CD4-positive, alpha-beta T cell (primary cell): ENCODE measurements at regions of chr13 and their contacts with region 1.

Region 1: GRCh38 chr13:43905435-43906031 is 25.8 kb downstream of the LACC1 start:
- DNase-seq: peak in 8 of 14 experiments; percentile 2 to 75 (median 23)
- ATAC-seq: peak; percentile 77
- H3K4me3 ChIP-seq: no peak overlapping the region
- H3K4me3 Mint-ChIP-seq: no peak overlapping the region
- H3K27ac ChIP-seq: no peak overlapping the region
- H3K27ac Mint-ChIP-seq: no peak overlapping the region
- H3K4me1 ChIP-seq: no peaks in the 10 kb centered on the region
- H3K4me1 Mint-ChIP-seq: no peaks in the 10 kb centered on the region
- H3K27me3 ChIP-seq: no peaks in the 10 kb centered on the region
- H3K27me3 Mint-ChIP-seq: peaks cover 8% of the 10 kb centered on the region
- CTCF ChIP-seq: peak; percentile 73

Region 2: DNA sequence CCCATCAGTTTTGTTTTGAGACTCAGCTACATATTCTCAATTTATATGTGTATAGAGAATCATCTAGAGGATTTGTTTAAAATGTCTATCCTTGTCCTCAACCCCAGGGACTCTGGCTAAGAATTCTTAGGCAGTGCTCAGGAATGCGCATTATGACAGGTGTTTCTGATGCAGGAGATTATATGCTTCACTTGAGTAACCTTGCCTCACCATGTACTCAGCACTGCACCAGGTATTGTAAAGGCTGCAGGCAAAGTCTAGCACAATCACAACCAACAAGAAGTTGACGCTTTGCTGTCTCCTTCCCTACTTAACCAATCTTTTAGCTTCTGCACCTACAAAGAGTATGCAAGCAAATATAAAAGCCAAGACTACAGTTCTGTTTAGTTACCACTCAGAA is 53.8 kb after region 1 on chr13:
- CTCF ChIA-PET with region 1: no interaction called
- POLR2A ChIA-PET with region 1: no interaction called
- intact Hi-C with region 1: no loop called
- DNase-seq: no peak
- ATAC-seq: no peak
- H3K4me3 ChIP-seq: no peak overlapping the region
- H3K4me3 Mint-ChIP-seq: no peak overlapping the region
- H3K27ac ChIP-seq: no peak overlapping the region
- H3K27ac Mint-ChIP-seq: no peak overlapping the region
- H3K4me1 ChIP-seq: no peaks in the 10 kb centered on the region
- H3K4me1 Mint-ChIP-seq: no peaks in the 10 kb centered on the region
- H3K27me3 ChIP-seq: peaks cover 3 to 5% of the 10 kb centered on the region in 2 experiments
- H3K27me3 Mint-ChIP-seq: peaks cover 8% of the 10 kb centered on the region
- CTCF ChIP-seq: no peak

Region 3: DNA sequence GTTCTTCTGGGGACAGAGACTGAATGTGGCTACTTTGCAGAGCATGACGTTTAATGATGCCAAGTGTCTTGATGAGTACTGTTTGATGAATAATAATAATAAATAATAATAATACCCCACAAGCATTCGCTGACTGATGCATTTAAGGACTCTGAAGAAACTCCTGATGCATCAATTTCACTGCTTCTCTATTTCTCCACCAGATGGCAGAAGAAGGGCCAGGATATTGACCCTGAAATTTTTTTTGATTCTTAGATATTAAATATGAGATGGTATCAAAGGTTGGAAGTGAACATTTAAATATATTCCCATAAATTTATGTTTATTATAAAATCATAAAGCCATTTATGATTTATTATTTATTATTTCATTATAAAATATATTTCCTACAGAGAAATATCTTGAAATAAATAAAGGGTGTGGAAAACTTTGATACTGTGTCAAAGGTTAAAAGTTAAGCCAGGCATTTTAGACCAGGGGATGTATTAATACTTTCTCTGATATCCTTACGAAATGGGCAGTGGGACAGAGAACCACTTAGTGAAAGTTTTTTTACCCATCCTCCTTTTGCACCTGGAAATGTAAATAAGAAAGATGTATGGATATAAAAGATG is 145.0 kb after region 1 on chr13:
- CTCF ChIA-PET with region 1: no interaction called
- POLR2A ChIA-PET with region 1: no interaction called
- intact Hi-C with region 1: loop called (anchors 10 kb)
- DNase-seq: peak in 3 of 14 experiments; percentile 50 to 58 (median 51)
- ATAC-seq: no peak
- H3K4me3 ChIP-seq: no peak overlapping the region
- H3K4me3 Mint-ChIP-seq: no peak overlapping the region
- H3K27ac ChIP-seq: no peak overlapping the region
- H3K27ac Mint-ChIP-seq: no peak overlapping the region
- H3K4me1 ChIP-seq: no peaks in the 10 kb centered on the region
- H3K4me1 Mint-ChIP-seq: no peaks in the 10 kb centered on the region
- H3K27me3 ChIP-seq: peaks cover 7 to 44% of the 10 kb centered on the region in 2 experiments
- H3K27me3 Mint-ChIP-seq: peaks cover 55% of the 10 kb centered on the region
- CTCF ChIP-seq: peak; percentile 70

Region 4: GRCh38 chr13:44191504-44192171 is 286.1 kb after region 1 on chr13:
- CTCF ChIA-PET with region 1: no interaction called
- POLR2A ChIA-PET with region 1: no interaction called
- intact Hi-C with region 1: loop called (anchors 5 kb)
- DNase-seq: peak in 13 of 14 experiments; percentile 3 to 80 (median 23)
- ATAC-seq: peak; percentile 87
- H3K4me3 ChIP-seq: peak overlapping the region; percentile 32
- H3K4me3 Mint-ChIP-seq: peak overlapping the region; percentile 35
- H3K27ac ChIP-seq: peak overlapping the region in 1 of 2 donors; percentile 41
- H3K27ac Mint-ChIP-seq: peak overlapping the region; percentile 79
- H3K4me1 ChIP-seq: peaks cover 13% of the 10 kb centered on the region
- H3K4me1 Mint-ChIP-seq: peaks cover 31% of the 10 kb centered on the region
- H3K27me3 ChIP-seq: no peaks in the 10 kb centered on the region
- H3K27me3 Mint-ChIP-seq: no peaks in the 10 kb centered on the region
- CTCF ChIP-seq: peak; percentile 57

Region 5: DNA sequence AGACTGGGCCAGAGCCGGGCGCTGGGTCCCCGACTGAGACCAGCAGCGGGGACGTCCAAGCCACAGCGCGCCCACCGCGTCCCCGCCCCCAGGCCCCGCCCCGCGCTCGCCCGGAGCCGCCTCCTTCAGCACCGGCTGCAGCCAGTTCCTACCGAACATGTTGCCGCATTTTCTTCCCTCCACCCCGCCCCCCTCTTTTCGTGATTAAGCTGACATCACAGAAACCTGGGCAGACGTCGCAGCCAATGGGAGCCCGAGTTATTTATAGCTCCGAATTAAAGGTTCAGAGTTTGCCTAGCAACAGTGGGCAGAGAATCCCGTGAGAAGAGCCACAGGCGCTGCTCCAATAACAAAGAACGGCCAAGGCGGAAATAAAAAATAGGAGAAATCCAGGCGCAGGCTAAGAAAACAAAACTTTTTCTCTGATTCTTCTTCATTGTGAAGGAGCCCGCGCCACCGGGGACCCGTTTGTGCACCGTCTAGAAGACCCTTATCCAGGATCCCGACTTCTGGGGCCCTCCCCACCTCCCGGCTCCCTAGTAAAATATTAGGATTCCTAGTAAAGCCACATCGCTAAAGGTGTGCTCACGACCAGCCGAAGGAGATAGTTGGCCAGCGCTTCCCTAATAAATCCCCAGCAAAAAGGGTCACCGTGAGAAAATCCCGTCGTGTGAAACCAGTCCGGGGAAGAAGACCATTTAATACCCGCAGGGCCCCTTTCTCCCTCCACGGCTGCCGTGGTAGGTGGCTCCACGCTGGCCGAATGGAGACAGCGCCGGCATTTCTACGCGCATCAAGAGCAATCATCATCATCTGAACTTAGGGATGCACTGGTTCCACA is 529.8 kb after region 1 on chr13:
- CTCF ChIA-PET with region 1: interaction called, 11 read pairs
- POLR2A ChIA-PET with region 1: no interaction called
- intact Hi-C with region 1: loop called (anchors 1 kb)
- DNase-seq: peak; percentile 76 to 95 (median 80)
- ATAC-seq: peak; percentile 83
- H3K4me3 ChIP-seq: peak overlapping the region; percentile 64
- H3K4me3 Mint-ChIP-seq: peak overlapping the region; percentile 91
- H3K27ac ChIP-seq: peak overlapping the region; percentile 3 to 43
- H3K27ac Mint-ChIP-seq: peak overlapping the region; percentile 57
- H3K4me1 ChIP-seq: peaks cover 29% of the 10 kb centered on the region
- H3K4me1 Mint-ChIP-seq: peaks cover 35% of the 10 kb centered on the region
- H3K27me3 ChIP-seq: peaks cover 14 to 18% of the 10 kb centered on the region in 2 experiments
- H3K27me3 Mint-ChIP-seq: peaks cover 12% of the 10 kb centered on the region
- CTCF ChIP-seq: no peak

Region 6: GRCh38 chr13:44470638-44471562 is 565.4 kb after region 1 on chr13:
- CTCF ChIA-PET with region 1: no interaction called
- POLR2A ChIA-PET with region 1: no interaction called
- intact Hi-C with region 1: loop called (anchors 1 kb)
- DNase-seq: peak in 3 of 14 experiments; percentile 28 to 53 (median 47)
- ATAC-seq: no peak
- H3K4me3 ChIP-seq: no peak overlapping the region
- H3K4me3 Mint-ChIP-seq: no peak overlapping the region
- H3K27ac ChIP-seq: no peak overlapping the region
- H3K27ac Mint-ChIP-seq: no peak overlapping the region
- H3K4me1 ChIP-seq: no peaks in the 10 kb centered on the region
- H3K4me1 Mint-ChIP-seq: no peaks in the 10 kb centered on the region
- H3K27me3 ChIP-seq: no peaks in the 10 kb centered on the region
- H3K27me3 Mint-ChIP-seq: no peaks in the 10 kb centered on the region
- CTCF ChIP-seq: peak; percentile 65

Region 7: GRCh38 chr13:44969551-44970484 is 1064.3 kb after region 1 on chr13:
- CTCF ChIA-PET with region 1: no interaction called
- POLR2A ChIA-PET with region 1: no interaction called
- intact Hi-C with region 1: loop called (anchors 5 kb)
- DNase-seq: peak in 4 of 14 experiments; percentile 5 to 47 (median 42)
- ATAC-seq: no peak
- H3K4me3 ChIP-seq: no peak overlapping the region
- H3K4me3 Mint-ChIP-seq: no peak overlapping the region
- H3K27ac ChIP-seq: no peak overlapping the region
- H3K27ac Mint-ChIP-seq: no peak overlapping the region
- H3K4me1 ChIP-seq: no peaks in the 10 kb centered on the region
- H3K4me1 Mint-ChIP-seq: no peaks in the 10 kb centered on the region
- H3K27me3 ChIP-seq: no peaks in the 10 kb centered on the region
- H3K27me3 Mint-ChIP-seq: no peaks in the 10 kb centered on the region
- CTCF ChIP-seq: peak; percentile 66

Region 8: DNA sequence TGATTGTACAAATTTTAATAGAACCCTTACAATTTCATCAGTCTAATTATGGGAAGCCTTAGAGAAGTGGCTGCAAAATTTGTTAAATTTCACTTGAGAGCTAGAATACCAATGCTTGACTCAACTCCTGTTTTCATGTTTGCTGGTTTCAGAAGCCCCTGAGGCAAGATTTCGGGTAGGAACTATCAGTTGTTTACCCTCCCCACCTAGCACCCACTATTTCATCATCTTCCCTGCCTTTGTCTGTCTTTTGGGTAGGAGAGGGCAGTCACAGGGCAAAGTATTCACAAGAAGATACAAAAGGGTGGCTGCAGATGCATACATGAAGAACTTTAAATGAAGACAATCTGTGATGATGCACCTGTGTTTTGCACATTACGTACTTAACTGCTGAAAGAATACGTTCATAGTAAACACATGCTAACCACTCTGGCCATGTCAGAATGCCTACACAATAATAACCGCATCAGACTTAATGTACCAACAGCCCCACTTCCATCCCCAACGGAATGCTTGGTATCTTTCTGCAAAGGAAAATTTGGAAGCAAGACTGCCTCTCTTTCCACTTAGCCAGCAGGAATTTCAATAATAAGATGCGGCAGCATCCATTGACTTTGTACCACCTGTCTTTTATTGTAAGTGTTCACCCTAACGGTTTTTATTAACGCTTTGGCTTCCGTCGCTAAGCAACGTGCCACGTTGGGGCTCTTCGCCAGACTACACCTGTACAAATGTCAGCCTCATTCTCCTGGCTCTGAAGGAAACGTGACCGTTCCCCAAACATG is 1405.0 kb after region 1 on chr13:
- CTCF ChIA-PET with region 1: no interaction called
- POLR2A ChIA-PET with region 1: no interaction called
- intact Hi-C with region 1: loop called in 1 of 2 experiments (anchors 5 kb)
- DNase-seq: no peak
- ATAC-seq: no peak
- H3K4me3 ChIP-seq: peak overlapping the region; percentile 63
- H3K4me3 Mint-ChIP-seq: peak overlapping the region; percentile 85
- H3K27ac ChIP-seq: no peak overlapping the region
- H3K27ac Mint-ChIP-seq: no peak overlapping the region
- H3K4me1 ChIP-seq: peaks cover 24% of the 10 kb centered on the region
- H3K4me1 Mint-ChIP-seq: peaks cover 20% of the 10 kb centered on the region
- H3K27me3 ChIP-seq: no peaks in the 10 kb centered on the region
- H3K27me3 Mint-ChIP-seq: peaks cover 8% of the 10 kb centered on the region
- CTCF ChIP-seq: no peak